ENCODE measurements at regions of chr2 and their contacts with region 1.

Region 1: GRCh38 chr2:55133467-55134315 is 83.4 kb upstream of the RTN4 start:
- DNase-seq: peak; percentile 4 to 92 (median 35)
- ATAC-seq: peak; percentile 92
- H3K4me3 ChIP-seq: peak overlapping the region; percentile 49 to 51
- H3K4me3 Mint-ChIP-seq: peak overlapping the region; percentile 89
- H3K27ac ChIP-seq: peak overlapping the region; percentile 60 to 93
- H3K27ac Mint-ChIP-seq: peak overlapping the region; percentile 97
- H3K4me1 ChIP-seq: peaks cover 27% of the 10 kb centered on the region
- H3K4me1 Mint-ChIP-seq: peaks cover 43% of the 10 kb centered on the region
- H3K27me3 ChIP-seq: no peaks in the 10 kb centered on the region
- H3K27me3 Mint-ChIP-seq: no peaks in the 10 kb centered on the region
- CTCF ChIP-seq: no peak

Region 2: DNA sequence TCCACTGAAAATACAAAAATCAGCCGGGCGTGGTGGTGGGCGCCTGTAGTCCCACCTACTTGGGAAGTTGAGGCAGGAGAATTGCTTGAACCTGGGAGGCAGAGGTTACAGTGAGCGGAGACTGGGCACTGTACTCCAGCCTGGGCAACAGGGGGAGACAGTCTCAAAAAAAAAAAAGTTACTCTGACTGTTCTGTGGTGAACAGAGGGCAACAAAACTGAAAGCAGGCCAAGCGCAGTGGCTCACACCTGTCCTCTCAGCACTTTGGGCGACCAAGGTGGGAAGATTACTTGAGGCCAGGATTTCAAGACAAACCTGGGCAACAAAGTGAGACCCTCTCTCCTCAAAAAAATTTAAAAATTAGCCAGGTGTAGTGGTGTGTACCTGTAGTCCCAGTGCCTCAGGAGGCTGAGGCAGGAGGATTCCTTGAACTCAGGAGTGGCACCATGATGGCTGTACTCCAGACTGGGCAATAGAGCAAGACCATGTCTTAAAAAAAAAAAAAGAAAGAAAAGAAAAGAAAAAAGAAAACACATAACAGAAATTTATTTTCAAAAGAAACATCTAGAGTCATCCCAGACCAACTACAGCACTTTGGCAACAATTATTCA is 69.9 kb before region 1 on chr2:
- CTCF ChIA-PET with region 1: no interaction called
- POLR2A ChIA-PET with region 1: no interaction called
- intact Hi-C with region 1: loop called in 1 of 2 experiments (anchors 5 kb)
- DNase-seq: no peak
- ATAC-seq: no peak
- H3K4me3 ChIP-seq: no peak overlapping the region
- H3K4me3 Mint-ChIP-seq: no peak overlapping the region
- H3K27ac ChIP-seq: no peak overlapping the region
- H3K27ac Mint-ChIP-seq: no peak overlapping the region
- H3K4me1 ChIP-seq: no peaks in the 10 kb centered on the region
- H3K4me1 Mint-ChIP-seq: no peaks in the 10 kb centered on the region
- H3K27me3 ChIP-seq: no peaks in the 10 kb centered on the region
- H3K27me3 Mint-ChIP-seq: no peaks in the 10 kb centered on the region
- CTCF ChIP-seq: no peak

Region 3: GRCh38 chr2:55159037-55159651 is 25.5 kb after region 1 on chr2:
- CTCF ChIA-PET with region 1: no interaction called
- POLR2A ChIA-PET with region 1: no interaction called
- intact Hi-C with region 1: no loop called
- DNase-seq: no peak
- ATAC-seq: no peak
- H3K4me3 ChIP-seq: no peak overlapping the region
- H3K4me3 Mint-ChIP-seq: no peak overlapping the region
- H3K27ac ChIP-seq: no peak overlapping the region
- H3K27ac Mint-ChIP-seq: no peak overlapping the region
- H3K4me1 ChIP-seq: no peaks in the 10 kb centered on the region
- H3K4me1 Mint-ChIP-seq: peaks cover 5% of the 10 kb centered on the region
- H3K27me3 ChIP-seq: no peaks in the 10 kb centered on the region
- H3K27me3 Mint-ChIP-seq: no peaks in the 10 kb centered on the region
- CTCF ChIP-seq: no peak

Region 4: GRCh38 chr2:55419679-55420438 is 286.2 kb after region 1 on chr2 and contains the start of gene CCDC88A:
- CTCF ChIA-PET with region 1: no interaction called
- POLR2A ChIA-PET with region 1: no interaction called
- intact Hi-C with region 1: loop called in 1 of 2 experiments (anchors 1 kb)
- DNase-seq: peak; percentile 71 to 96 (median 85)
- ATAC-seq: peak; percentile 80
- H3K4me3 ChIP-seq: peak within 1 kb of the TSS; percentile 75 to 93
- H3K4me3 Mint-ChIP-seq: peak within 1 kb of the TSS; percentile 92
- H3K27ac ChIP-seq: peak within 1 kb of the TSS; percentile 57 to 83
- H3K27ac Mint-ChIP-seq: peak within 1 kb of the TSS; percentile 87
- H3K4me1 ChIP-seq: peaks cover 14% of the 10 kb centered on the region
- H3K4me1 Mint-ChIP-seq: peaks cover 38% of the 10 kb centered on the region
- H3K27me3 ChIP-seq: no peaks in the 10 kb centered on the region
- H3K27me3 Mint-ChIP-seq: peaks cover 4% of the 10 kb centered on the region
- CTCF ChIP-seq: no peak
- total RNA-seq, gene CCDC88A: 9.5 to 12.3 TPM